Thyroid gland (tissue), 4 donors: ENCODE measurements at regions of chr9 and their contacts with region 1.

Region 1: GRCh38 chr9:14768405-14769229 is 46.1 kb upstream of the CER1 start:
- DNase-seq: peak; percentile 13 to 29
- H3K4me3 ChIP-seq: no peak overlapping the region
- H3K27ac ChIP-seq: no peak overlapping the region
- H3K4me1 ChIP-seq: no peaks in the 10 kb centered on the region
- H3K27me3 ChIP-seq: no peaks in the 10 kb centered on the region
- CTCF ChIP-seq: peak; percentile 45 to 78 (median 64)
- POLR2A ChIP-seq: no peak

Region 2: GRCh38 chr9:13351778-13352386 is 1416.7 kb before region 1 on chr9:
- intact Hi-C with region 1: loop called (anchors 5 kb)
- DNase-seq: no peak
- H3K4me3 ChIP-seq: no peak overlapping the region
- H3K27ac ChIP-seq: no peak overlapping the region
- H3K4me1 ChIP-seq: no peaks in the 10 kb centered on the region
- H3K27me3 ChIP-seq: no peaks in the 10 kb centered on the region
- CTCF ChIP-seq: peak in 5 of 6 experiments; percentile 11 to 56 (median 51)
- POLR2A ChIP-seq: no peak

Region 3: GRCh38 chr9:14616188-14616982 is 152.2 kb before region 1 on chr9:
- intact Hi-C with region 1: loop called (anchors 10 kb)
- DNase-seq: no peak
- H3K4me3 ChIP-seq: no peak overlapping the region
- H3K27ac ChIP-seq: no peak overlapping the region
- H3K4me1 ChIP-seq: no peaks in the 10 kb centered on the region
- H3K27me3 ChIP-seq: no peaks in the 10 kb centered on the region
- CTCF ChIP-seq: peak in 5 of 6 experiments; percentile 15 to 57 (median 45)
- POLR2A ChIP-seq: no peak

Region 4: GRCh38 chr9:14693206-14693861 is 75.3 kb before region 1 on chr9 and contains the start of gene ZDHHC21:
- intact Hi-C with region 1: no loop called
- DNase-seq: peak; percentile 81 to 84
- H3K4me3 ChIP-seq: peak within 1 kb of the TSS; percentile 48 to 83 (median 69)
- H3K27ac ChIP-seq: peak within 1 kb of the TSS; percentile 18 to 49 (median 21)
- H3K4me1 ChIP-seq: peaks cover 0 to 5% of the 10 kb centered on the region in 2 donors
- H3K27me3 ChIP-seq: no peaks in the 10 kb centered on the region
- CTCF ChIP-seq: peak in 1 of 6 experiments; percentile 4
- POLR2A ChIP-seq: peak in 1 of 2 donors; percentile 53
- total RNA-seq, gene ZDHHC21: 17.5 to 34.6 (median 18.9) TPM

Region 5: GRCh38 chr9:15116130-15116580 is 347.5 kb after region 1 on chr9:
- intact Hi-C with region 1: no loop called
- DNase-seq: no peak
- H3K4me3 ChIP-seq: no peak overlapping the region
- H3K27ac ChIP-seq: no peak overlapping the region
- H3K4me1 ChIP-seq: no peaks in the 10 kb centered on the region
- H3K27me3 ChIP-seq: no peaks in the 10 kb centered on the region
- CTCF ChIP-seq: no peak
- POLR2A ChIP-seq: no peak